ENCODE measurements at regions of chr11 and their contacts with region 1.

Region 1: GRCh38 chr11:31826536-31827438 is 15.7 kb upstream of the PAX6 start:
- DNase-seq: no peak
- ATAC-seq: no peak
- H3K4me3 ChIP-seq: no peak overlapping the region
- H3K4me3 Mint-ChIP-seq: peak overlapping the region in 7 of 10 donors; percentile 10 to 66 (median 51)
- H3K27ac ChIP-seq: no peak overlapping the region
- H3K27ac Mint-ChIP-seq: peak overlapping the region in 1 of 9 donors; percentile 77
- H3K4me1 ChIP-seq: no peaks in the 10 kb centered on the region
- H3K4me1 Mint-ChIP-seq: peaks cover 3 to 30% (median 21%) of the 10 kb centered on the region in 7 donors
- H3K27me3 ChIP-seq: peaks cover 11 to 40% of the 10 kb centered on the region in 2 donors
- H3K27me3 Mint-ChIP-seq: peaks cover 77 to 79% (median 78%) of the 10 kb centered on the region in 5 donors

Region 2: DNA sequence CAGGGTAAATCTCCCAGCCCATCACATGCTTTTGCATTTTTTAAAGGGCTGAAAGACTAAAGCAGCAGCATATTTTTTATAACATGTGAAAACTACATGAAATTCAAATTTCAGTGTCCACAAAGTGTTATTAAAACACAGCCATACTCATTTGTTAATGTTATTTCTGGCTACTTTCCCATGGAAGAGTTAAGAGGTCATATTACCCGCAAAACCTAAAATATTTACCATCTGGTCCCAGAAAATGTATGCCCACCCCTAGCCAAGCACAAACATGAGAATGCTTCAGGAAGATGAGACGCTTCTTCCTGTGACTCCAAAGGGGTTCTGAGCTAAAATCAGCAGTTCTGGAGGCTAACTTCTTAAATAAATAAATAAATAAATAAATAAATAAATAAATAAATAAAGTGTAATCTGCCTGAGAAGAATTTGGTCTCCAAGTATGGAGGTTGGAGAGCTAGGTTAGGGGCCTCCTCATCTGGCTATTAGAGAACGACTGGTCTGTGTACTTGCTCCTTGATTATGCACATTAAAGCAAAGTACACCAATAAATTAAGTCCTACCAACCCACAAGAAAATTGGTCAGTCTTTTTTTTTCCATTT is 327.1 kb before region 1 on chr11:
- CTCF ChIA-PET with region 1: no interaction called
- POLR2A ChIA-PET with region 1: no interaction called
- intact Hi-C with region 1: no loop called
- DNase-seq: no peak
- ATAC-seq: no peak
- H3K4me3 ChIP-seq: no peak overlapping the region
- H3K4me3 Mint-ChIP-seq: no peak overlapping the region
- H3K27ac ChIP-seq: no peak overlapping the region
- H3K27ac Mint-ChIP-seq: no peak overlapping the region
- H3K4me1 ChIP-seq: no peaks in the 10 kb centered on the region
- H3K4me1 Mint-ChIP-seq: peaks cover 5 to 71% (median 47%) of the 10 kb centered on the region in 7 donors
- H3K27me3 ChIP-seq: no peaks in the 10 kb centered on the region
- H3K27me3 Mint-ChIP-seq: no peaks in the 10 kb centered on the region

Region 3: GRCh38 chr11:31804312-31805036 is 22.3 kb before region 1 on chr11:
- CTCF ChIA-PET with region 1: no interaction called
- POLR2A ChIA-PET with region 1: no interaction called
- intact Hi-C with region 1: loop called in 1 of 2 experiments (anchors 2 kb)
- DNase-seq: no peak
- ATAC-seq: no peak
- H3K4me3 ChIP-seq: no peak overlapping the region
- H3K4me3 Mint-ChIP-seq: peak overlapping the region; percentile 36 to 82 (median 72)
- H3K27ac ChIP-seq: no peak overlapping the region
- H3K27ac Mint-ChIP-seq: peak overlapping the region in 3 of 9 donors; percentile 5 to 78 (median 34)
- H3K4me1 ChIP-seq: peaks cover 5 to 26% of the 10 kb centered on the region in 2 donors
- H3K4me1 Mint-ChIP-seq: peaks cover 30 to 60% (median 52%) of the 10 kb centered on the region in 7 donors
- H3K27me3 ChIP-seq: peaks cover 22 to 68% of the 10 kb centered on the region in 2 donors
- H3K27me3 Mint-ChIP-seq: peaks cover 86 to 96% (median 87%) of the 10 kb centered on the region in 5 donors

Region 4: DNA sequence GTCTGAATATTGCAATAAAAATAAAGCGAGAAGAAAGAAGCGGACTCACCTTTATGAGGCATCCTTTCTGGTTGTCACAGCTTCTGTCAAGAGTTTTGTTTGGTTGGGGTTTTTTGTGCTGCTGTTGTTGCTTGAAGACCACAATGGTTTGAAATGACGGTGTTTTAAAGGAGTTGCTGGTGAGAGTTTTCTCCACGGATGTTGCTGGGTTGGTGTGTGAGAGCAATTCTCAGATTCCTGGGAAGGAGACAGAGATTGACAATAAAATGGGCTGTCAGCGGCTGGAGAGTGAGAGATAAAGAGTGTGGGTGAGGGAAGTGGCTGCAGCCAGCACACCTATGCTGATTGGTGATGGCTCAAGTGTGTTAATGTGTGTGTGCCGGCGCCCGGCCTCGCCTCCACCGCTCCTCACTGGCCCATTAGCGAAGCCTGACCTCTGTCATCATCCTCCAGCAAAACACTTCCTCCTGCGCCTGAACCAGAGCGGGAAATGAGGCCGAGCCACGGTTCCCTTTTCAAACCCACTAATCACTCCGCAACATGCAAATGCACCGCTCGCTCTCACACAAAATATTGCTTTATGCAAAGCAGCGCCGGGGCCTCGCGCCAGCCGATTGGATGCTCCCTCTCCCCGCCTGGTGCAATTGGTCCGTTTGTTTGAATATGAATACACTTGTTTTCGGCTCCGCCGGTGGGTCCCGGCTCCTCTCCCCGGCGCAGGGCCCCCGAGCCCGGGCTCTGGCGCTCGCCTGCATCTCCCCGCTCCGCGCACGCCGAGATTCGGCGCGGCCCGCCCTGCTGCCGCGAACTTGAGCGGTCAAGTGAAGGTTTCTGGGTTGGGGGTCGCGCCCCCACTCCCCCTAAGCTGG is 15.8 kb before region 1 on chr11 and contains the start of gene PAX6:
- CTCF ChIA-PET with region 1: no interaction called
- POLR2A ChIA-PET with region 1: no interaction called
- intact Hi-C with region 1: loop called in 1 of 2 experiments (anchors 2 kb)
- DNase-seq: peak in 2 of 9 donors; percentile 19 to 43
- ATAC-seq: peak; percentile 77
- H3K4me3 ChIP-seq: peak within 1 kb of the TSS; percentile 46
- H3K4me3 Mint-ChIP-seq: peak within 1 kb of the TSS; percentile 73 to 94 (median 84)
- H3K27ac ChIP-seq: no peak within 1 kb of the TSS
- H3K27ac Mint-ChIP-seq: peak within 1 kb of the TSS in 5 of 9 donors; percentile 8 to 73 (median 59)
- H3K4me1 ChIP-seq: peaks cover 16 to 28% of the 10 kb centered on the region in 2 donors
- H3K4me1 Mint-ChIP-seq: peaks cover 22 to 73% (median 61%) of the 10 kb centered on the region in 7 donors
- H3K27me3 ChIP-seq: peaks cover 16 to 66% of the 10 kb centered on the region in 2 donors
- H3K27me3 Mint-ChIP-seq: peaks cover 73 to 86% (median 77%) of the 10 kb centered on the region in 5 donors
- total RNA-seq, gene PAX6: not detected

Region 5: DNA sequence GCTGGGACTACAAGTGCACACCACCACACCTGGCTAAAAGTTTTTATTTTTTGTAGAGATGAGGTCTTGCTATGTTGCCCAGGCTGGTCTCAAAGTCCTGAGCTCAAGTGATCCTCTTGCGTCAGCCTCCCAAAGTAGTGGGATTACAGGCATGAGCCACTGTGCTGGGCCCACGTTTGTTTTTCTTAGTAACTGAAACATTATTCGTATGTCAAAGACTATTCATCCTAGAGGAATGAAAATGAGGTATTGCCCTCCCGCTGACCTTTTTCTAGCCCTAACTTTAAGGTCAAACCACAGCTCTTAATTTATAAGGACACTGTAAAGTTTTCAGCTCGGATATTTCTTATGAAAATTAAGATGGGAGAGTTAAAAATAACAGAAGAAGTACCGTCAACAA is 17.6 kb after region 1 on chr11:
- CTCF ChIA-PET with region 1: no interaction called
- POLR2A ChIA-PET with region 1: no interaction called
- intact Hi-C with region 1: no loop called
- DNase-seq: no peak
- ATAC-seq: no peak
- H3K4me3 ChIP-seq: no peak overlapping the region
- H3K4me3 Mint-ChIP-seq: no peak overlapping the region
- H3K27ac ChIP-seq: no peak overlapping the region
- H3K27ac Mint-ChIP-seq: no peak overlapping the region
- H3K4me1 ChIP-seq: no peaks in the 10 kb centered on the region
- H3K4me1 Mint-ChIP-seq: no peaks in the 10 kb centered on the region
- H3K27me3 ChIP-seq: no peaks in the 10 kb centered on the region
- H3K27me3 Mint-ChIP-seq: peaks cover 39 to 68% (median 54%) of the 10 kb centered on the region in 5 donors

Region 6: DNA sequence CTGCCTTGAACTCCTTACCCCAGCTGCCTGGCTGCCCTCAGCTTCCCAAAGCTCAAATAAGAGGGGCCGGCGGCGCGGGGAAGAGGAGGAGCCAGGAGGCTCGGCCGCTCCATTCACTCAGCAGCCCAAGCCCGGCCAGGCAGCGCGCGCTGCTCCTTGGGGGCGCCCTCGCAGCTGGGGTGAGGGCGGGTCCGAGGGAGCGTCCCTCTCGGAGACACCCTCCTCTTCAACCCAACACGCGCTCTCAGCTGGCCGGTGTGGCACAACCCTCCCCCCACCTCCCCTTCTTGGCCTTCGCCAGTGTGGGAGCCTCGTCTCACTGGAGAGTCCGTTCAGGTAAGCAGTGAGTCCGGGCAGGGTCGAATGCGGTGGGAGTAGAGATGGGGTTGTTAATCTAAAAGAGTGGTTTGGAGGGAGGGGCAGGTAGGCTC is 608.7 kb after region 1 on chr11 and contains the start of gene WT1:
- CTCF ChIA-PET with region 1: no interaction called
- POLR2A ChIA-PET with region 1: no interaction called
- intact Hi-C with region 1: loop called in 1 of 2 experiments (anchors 5 kb)
- DNase-seq: no peak
- ATAC-seq: no peak
- H3K4me3 ChIP-seq: no peak within 1 kb of the TSS
- H3K4me3 Mint-ChIP-seq: peak within 1 kb of the TSS in 7 of 10 donors; percentile 24 to 72 (median 37)
- H3K27ac ChIP-seq: no peak within 1 kb of the TSS
- H3K27ac Mint-ChIP-seq: peak within 1 kb of the TSS in 1 of 9 donors; percentile 77
- H3K4me1 ChIP-seq: no peaks in the 10 kb centered on the region
- H3K4me1 Mint-ChIP-seq: peaks cover 18 to 51% (median 47%) of the 10 kb centered on the region in 7 donors
- H3K27me3 ChIP-seq: peaks cover 5 to 11% of the 10 kb centered on the region in 2 donors
- H3K27me3 Mint-ChIP-seq: peaks cover 64 to 90% (median 79%) of the 10 kb centered on the region in 5 donors
- total RNA-seq, gene WT1: not detected

Measured in naive thymus-derived CD4-positive, alpha-beta T cell (primary cell).